ENCODE measurements at regions of chr2 and their contacts with region 1.

Region 1: DNA sequence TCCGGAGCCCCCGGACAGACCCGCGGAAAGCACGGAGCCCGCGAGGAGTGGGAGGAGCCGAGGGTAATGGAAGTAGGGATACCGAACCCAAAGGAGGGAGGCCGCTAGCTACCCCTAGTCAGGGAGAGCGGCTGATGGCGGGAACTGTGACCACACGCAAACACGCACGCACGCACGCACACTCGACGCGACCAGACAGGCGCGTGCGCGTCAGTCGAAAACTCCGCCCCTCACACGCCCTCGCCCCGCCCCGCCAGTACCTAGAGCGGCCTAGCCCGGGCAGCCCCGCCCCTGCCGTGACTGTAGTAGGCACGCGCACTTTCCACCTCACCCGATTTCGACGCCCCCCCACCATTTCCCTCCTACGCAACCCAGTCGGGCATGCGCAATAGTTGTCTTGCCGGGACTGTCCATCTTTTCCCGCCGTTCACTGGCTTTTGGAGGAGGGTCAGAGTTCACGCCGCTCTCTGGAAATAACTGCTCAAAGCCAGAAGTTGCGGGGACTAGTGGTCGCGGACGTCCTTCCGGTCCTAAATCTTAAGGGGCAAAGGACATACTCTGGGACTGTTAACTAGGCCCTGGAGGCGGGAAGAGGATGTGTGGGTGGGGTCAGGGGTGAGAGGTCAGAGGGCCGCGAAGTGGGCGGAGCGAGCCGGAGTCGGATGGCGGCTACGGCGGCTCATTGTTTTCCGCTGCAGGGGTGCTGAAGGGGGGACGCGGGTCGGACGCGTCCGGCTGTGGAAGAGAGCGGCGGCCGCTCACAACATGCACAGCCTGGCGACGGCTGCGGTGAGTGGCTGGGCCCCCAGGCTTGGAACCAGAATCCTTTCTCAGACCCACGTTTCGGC is at the starts of genes CNOT9 and USP37:
- DNase-seq: peak; percentile 100
- H3K4me3 ChIP-seq: peak within 1 kb of the TSS; percentile 60 to 76 (median 70)
- H3K27ac ChIP-seq: peak within 1 kb of the TSS; percentile 91 to 96 (median 94)
- H3K4me1 ChIP-seq: peaks cover 0 to 40% (median 36%) of the 10 kb centered on the region in 4 donors
- H3K27me3 ChIP-seq: no peaks in the 10 kb centered on the region
- CTCF ChIP-seq: no peak
- EP300 ChIP-seq: peak in 2 of 4 donors; percentile 51 to 90
- POLR2A ChIP-seq: peak; percentile 65 to 67
- total RNA-seq, gene CNOT9: 25.0 to 36.2 (median 28.5) TPM
- total RNA-seq, gene USP37: 6.6 to 11.4 (median 10.5) TPM

Region 2: GRCh38 chr2:218607436-218608115 is 39.2 kb after region 1 on chr2 and contains the start of gene PLCD4:
- intact Hi-C with region 1: loop called (anchors 5 kb)
- DNase-seq: peak; percentile 89
- H3K4me3 ChIP-seq: peak within 1 kb of the TSS; percentile 35 to 47 (median 44)
- H3K27ac ChIP-seq: peak within 1 kb of the TSS; percentile 58 to 84 (median 79)
- H3K4me1 ChIP-seq: peaks cover 0 to 44% (median 16%) of the 10 kb centered on the region in 4 donors
- H3K27me3 ChIP-seq: no peaks in the 10 kb centered on the region
- CTCF ChIP-seq: peak in 2 of 4 experiments; percentile 12 to 19
- EP300 ChIP-seq: no peak
- POLR2A ChIP-seq: peak; percentile 41 to 43
- total RNA-seq, gene PLCD4: 10.9 to 42.4 (median 30.4) TPM

Region 3: DNA sequence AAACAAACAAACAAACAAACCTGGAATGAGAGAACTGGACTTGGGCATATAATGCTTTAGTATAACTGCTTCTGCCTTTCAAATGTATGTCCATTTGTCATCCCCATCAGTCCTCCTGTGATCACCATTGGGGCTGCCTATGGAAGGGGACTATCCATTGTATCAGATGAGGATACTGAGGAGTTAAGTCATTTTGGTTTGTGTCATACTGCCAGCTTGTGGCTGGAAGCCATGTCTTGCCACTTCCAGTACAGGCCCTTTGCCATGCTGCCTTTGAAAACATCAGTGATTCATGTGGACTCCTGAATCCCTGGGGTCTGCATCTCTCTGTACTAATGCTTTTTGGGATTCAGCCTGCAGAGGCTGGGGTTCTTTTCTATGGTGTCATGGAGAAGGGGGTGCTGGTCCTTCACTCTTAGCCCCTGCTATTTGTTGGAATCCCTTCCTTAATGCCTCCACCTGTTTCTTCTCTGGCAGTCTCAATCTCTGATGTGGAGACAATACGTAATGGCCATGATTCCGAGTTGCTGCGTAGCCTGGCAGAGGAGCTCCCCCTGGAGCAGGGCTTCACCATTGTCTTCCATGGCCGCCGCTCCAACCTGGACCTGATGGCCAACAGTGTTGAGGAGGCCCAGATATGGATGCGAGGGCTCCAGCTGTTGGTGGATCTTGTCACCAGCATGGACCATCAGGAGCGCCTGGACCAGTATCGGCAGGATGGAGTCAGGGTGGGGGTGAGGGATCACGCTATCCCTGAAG is 49.9 kb after region 1 on chr2:
- intact Hi-C with region 1: loop called (anchors 5 kb)
- DNase-seq: no peak
- H3K4me3 ChIP-seq: no peak overlapping the region
- H3K27ac ChIP-seq: no peak overlapping the region
- H3K4me1 ChIP-seq: peaks cover 0 to 28% (median 23%) of the 10 kb centered on the region in 4 donors
- H3K27me3 ChIP-seq: no peaks in the 10 kb centered on the region
- CTCF ChIP-seq: no peak
- EP300 ChIP-seq: no peak
- POLR2A ChIP-seq: no peak

Region 4: GRCh38 chr2:218648088-218648786 is 79.8 kb after region 1 on chr2:
- intact Hi-C with region 1: loop called (anchors 5 kb)
- DNase-seq: peak; percentile 17
- H3K4me3 ChIP-seq: no peak overlapping the region
- H3K27ac ChIP-seq: no peak overlapping the region
- H3K4me1 ChIP-seq: no peaks in the 10 kb centered on the region
- H3K27me3 ChIP-seq: no peaks in the 10 kb centered on the region
- CTCF ChIP-seq: peak; percentile 48 to 83 (median 76)
- EP300 ChIP-seq: no peak
- POLR2A ChIP-seq: no peak